Gastrocnemius medialis (tissue), 4 donors: ENCODE measurements at regions of chr14 and their contacts with region 1.

Region 1: GRCh38 chr14:105527661-105528581 is 1.5 kb downstream of the TMEM121 start:
- DNase-seq: peak; percentile 26 to 49
- ATAC-seq: peak; percentile 74 to 88
- H3K4me3 ChIP-seq: peak overlapping the region; percentile 61 to 86 (median 68)
- H3K27ac ChIP-seq: peak overlapping the region in 1 of 4 donors; percentile 12
- H3K4me1 ChIP-seq: peaks cover 11 to 24% of the 10 kb centered on the region in 2 donors
- H3K27me3 ChIP-seq: peaks cover 24 to 37% (median 32%) of the 10 kb centered on the region in 3 donors
- CTCF ChIP-seq: peak; percentile 62 to 92 (median 80)
- POLR2A ChIP-seq: no peak

Region 2: DNA sequence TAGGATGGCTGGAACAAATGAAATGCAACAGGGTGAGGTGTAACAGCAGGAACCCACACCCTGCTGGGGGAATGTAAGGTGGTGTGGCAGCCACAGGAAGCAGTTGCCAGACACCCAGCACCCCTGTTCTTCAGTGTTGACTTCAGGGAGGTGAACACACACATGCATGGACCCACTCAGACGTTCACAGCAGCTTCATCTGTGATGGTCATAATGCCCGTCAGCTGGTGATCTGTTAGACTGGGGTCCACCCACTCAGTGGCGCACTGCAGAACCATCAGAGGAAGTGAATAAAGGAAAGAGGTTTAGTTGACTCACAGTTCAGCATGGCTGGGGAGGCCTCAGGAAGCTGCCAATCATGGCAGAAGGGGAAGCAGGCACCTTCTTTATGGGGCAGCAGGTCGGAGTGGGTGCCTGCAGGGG is 152.3 kb before region 1 on chr14:
- in situ Hi-C with region 1: loop called in 1 of 4 experiments (anchors 5 kb)
- intact Hi-C with region 1: loop called (anchors 1 kb)
- DNase-seq: no peak
- ATAC-seq: no peak
- H3K4me3 ChIP-seq: no peak overlapping the region
- H3K27ac ChIP-seq: no peak overlapping the region
- H3K4me1 ChIP-seq: no peaks in the 10 kb centered on the region
- H3K27me3 ChIP-seq: no peaks in the 10 kb centered on the region
- CTCF ChIP-seq: no peak
- POLR2A ChIP-seq: no peak

Region 3: DNA sequence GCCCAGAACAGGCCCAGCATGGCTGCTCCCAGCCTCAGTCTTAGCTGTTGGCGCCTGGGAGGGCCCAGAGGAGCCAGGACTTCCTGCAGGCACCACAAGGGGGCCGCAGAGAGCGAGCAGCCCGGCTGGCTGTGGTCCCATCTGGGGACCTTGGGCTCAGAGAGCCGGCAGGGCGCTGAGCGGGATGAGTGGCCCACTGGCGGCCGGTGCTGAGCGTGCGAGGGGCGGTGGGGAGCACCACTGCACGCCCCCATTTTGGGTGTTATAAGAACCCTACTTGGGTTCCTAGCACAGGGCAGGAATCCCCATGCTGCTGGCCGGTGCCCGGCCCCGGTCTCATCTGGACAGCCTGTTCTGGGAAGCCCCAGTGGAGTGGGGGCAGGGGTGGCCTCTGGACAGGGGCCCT is 79.2 kb before region 1 on chr14:
- in situ Hi-C with region 1: no loop called
- intact Hi-C with region 1: loop called (anchors 1 kb)
- DNase-seq: peak; percentile 41 to 58
- ATAC-seq: peak; percentile 89 to 90
- H3K4me3 ChIP-seq: no peak overlapping the region
- H3K27ac ChIP-seq: no peak overlapping the region
- H3K4me1 ChIP-seq: peaks cover 2 to 9% of the 10 kb centered on the region in 2 donors
- H3K27me3 ChIP-seq: no peaks in the 10 kb centered on the region
- CTCF ChIP-seq: peak; percentile 69 to 94 (median 90)
- POLR2A ChIP-seq: no peak

Region 4: GRCh38 chr14:105480952-105481801 is 46.7 kb before region 1 on chr14:
- in situ Hi-C with region 1: no loop called
- intact Hi-C with region 1: loop called (anchors 1 kb)
- DNase-seq: peak; percentile 62 to 76
- ATAC-seq: peak; percentile 81 to 82
- H3K4me3 ChIP-seq: peak overlapping the region; percentile 8 to 53 (median 40)
- H3K27ac ChIP-seq: peak overlapping the region; percentile 67 to 81 (median 78)
- H3K4me1 ChIP-seq: peaks cover 27 to 50% of the 10 kb centered on the region in 2 donors
- H3K27me3 ChIP-seq: peaks cover 5 to 15% (median 7%) of the 10 kb centered on the region in 3 donors
- CTCF ChIP-seq: peak; percentile 94 to 99 (median 98)
- POLR2A ChIP-seq: no peak

Region 5: GRCh38 chr14:105517096-105517495 is 10.8 kb before region 1 on chr14:
- in situ Hi-C with region 1: no loop called
- intact Hi-C with region 1: no loop called
- DNase-seq: no peak
- ATAC-seq: no peak
- H3K4me3 ChIP-seq: no peak overlapping the region
- H3K27ac ChIP-seq: no peak overlapping the region
- H3K4me1 ChIP-seq: no peaks in the 10 kb centered on the region
- H3K27me3 ChIP-seq: peaks cover 5 to 12% (median 7%) of the 10 kb centered on the region in 3 donors
- CTCF ChIP-seq: no peak
- POLR2A ChIP-seq: no peak

Region 6: DNA sequence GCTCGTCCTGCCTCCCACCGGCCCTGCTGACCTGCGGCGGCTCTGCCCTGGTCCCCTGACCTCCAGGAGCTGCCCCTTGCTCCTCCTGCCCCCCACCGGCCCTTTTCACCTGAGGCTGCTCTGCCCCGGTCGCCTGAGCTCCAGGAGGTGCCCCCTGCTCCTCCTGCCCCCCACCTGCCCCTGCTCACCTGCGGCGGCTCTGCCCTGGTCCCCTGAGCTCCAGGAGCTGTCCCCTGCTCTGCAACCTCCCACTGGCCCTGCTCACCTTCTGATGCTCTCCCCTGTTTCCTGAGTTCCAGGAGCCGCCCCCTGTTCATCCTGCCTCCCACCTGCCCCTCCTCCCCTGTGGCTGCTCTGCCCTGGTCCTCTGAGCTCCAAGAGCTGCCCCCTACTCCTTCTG is 99.8 kb after region 1 on chr14:
- in situ Hi-C with region 1: no loop called
- intact Hi-C with region 1: no loop called
- DNase-seq: no peak
- ATAC-seq: no peak
- H3K4me3 ChIP-seq: no peak overlapping the region
- H3K27ac ChIP-seq: no peak overlapping the region
- H3K4me1 ChIP-seq: no peaks in the 10 kb centered on the region
- H3K27me3 ChIP-seq: peaks cover 0 to 5% (median 0%) of the 10 kb centered on the region in 3 donors
- CTCF ChIP-seq: no peak
- POLR2A ChIP-seq: no peak